ENCODE measurements at regions of chr12 and their contacts with region 1.

Region 1: DNA sequence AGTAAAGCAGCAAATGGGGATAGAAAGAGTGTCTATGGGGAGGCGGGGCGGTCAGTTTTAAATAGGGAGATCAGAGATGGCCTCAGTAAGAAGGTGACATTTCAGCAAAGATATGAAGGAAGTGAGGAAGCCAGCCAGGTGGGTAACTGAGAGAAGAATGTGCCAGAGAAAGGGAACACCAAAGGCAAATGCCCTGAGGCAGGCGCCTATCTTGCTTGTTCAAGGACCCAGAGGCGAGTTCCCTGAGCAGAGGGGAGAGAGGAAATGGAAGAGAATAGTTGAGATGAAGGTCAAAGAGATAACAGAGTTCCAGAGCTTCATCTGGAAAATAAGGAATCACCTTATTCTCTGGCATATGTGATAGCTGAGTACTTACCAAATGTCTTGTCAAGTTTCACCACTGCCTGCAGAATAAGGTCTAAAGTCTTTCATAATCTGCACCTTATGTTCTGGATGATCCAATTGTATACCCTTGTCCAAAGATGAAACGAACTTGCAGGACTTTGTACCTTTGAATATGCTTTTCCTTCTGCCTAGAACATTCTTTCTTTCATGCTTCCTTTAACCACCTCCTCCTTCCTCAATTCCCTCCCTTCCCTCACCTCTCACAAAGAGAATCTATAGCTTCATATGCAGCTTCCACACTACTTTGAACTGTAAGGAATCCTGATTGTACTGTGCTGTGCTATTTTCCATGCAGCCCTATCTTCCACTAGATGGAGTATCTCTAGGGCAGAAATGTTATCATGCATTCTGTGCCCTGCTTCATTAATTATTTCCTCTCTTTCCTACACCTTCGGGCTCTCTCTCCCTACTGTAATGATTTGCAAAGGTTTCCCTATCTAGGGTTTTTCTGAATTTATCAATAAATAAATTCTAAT is 38.5 kb downstream of the GNPTAB start:
- H3K4me3 Mint-ChIP-seq: no peak overlapping the region
- H3K27ac Mint-ChIP-seq: peak overlapping the region; percentile 0
- H3K4me1 Mint-ChIP-seq: peaks cover 24% of the 10 kb centered on the region
- H3K27me3 Mint-ChIP-seq: no peaks in the 10 kb centered on the region

Region 2: DNA sequence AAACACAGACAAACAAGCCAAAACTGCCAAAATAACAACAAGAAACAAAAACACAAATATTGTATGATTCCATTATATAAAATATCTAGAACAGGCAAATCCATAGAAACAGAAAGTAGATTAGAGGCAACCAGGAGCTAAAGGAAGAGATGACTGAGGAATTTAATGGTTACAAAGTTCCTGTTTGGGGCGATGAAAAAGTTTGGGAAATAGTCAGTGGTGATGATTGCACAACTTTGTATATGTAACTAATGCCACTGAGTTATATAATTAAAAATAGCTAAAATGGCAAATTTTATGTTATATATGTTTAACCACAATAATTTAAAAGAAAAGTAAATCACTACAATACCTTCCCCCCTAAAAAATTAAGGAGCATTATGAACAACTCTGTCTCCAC is 14.0 kb after region 1 on chr12:
- intact Hi-C with region 1: loop called (anchors 2 kb)
- H3K4me3 Mint-ChIP-seq: no peak overlapping the region
- H3K27ac Mint-ChIP-seq: peak overlapping the region; percentile 62
- H3K4me1 Mint-ChIP-seq: peaks cover 22% of the 10 kb centered on the region
- H3K27me3 Mint-ChIP-seq: no peaks in the 10 kb centered on the region

Region 3: GRCh38 chr12:101830367-101831325 is 38.4 kb after region 1 on chr12 and contains the start of gene GNPTAB:
- intact Hi-C with region 1: loop called (anchors 5 kb)
- H3K4me3 Mint-ChIP-seq: peak within 1 kb of the TSS; percentile 97
- H3K27ac Mint-ChIP-seq: peak within 1 kb of the TSS; percentile 85
- H3K4me1 Mint-ChIP-seq: peaks cover 32% of the 10 kb centered on the region
- H3K27me3 Mint-ChIP-seq: no peaks in the 10 kb centered on the region

Region 4: GRCh38 chr12:101845137-101845711 is 52.9 kb after region 1 on chr12:
- intact Hi-C with region 1: no loop called
- H3K4me3 Mint-ChIP-seq: no peak overlapping the region
- H3K27ac Mint-ChIP-seq: no peak overlapping the region
- H3K4me1 Mint-ChIP-seq: peaks cover 4% of the 10 kb centered on the region
- H3K27me3 Mint-ChIP-seq: no peaks in the 10 kb centered on the region